Activated T-helper 1 cell treated with anti-CD3 and anti-CD28 coated beads, Interleukin-12 subunit alpha, Interleukin-12 subunit beta, Interleukin-2, Interleukin-4 antibody, amounts not matched to agents 30 ng/mL and 10 ng/mL and 1 ng/mL, durations not matched to agents 14 hours and 24 hours and 36 hours (primary cell): ENCODE measurements at regions of chr1 and their contacts with region 1.

Region 1: DNA sequence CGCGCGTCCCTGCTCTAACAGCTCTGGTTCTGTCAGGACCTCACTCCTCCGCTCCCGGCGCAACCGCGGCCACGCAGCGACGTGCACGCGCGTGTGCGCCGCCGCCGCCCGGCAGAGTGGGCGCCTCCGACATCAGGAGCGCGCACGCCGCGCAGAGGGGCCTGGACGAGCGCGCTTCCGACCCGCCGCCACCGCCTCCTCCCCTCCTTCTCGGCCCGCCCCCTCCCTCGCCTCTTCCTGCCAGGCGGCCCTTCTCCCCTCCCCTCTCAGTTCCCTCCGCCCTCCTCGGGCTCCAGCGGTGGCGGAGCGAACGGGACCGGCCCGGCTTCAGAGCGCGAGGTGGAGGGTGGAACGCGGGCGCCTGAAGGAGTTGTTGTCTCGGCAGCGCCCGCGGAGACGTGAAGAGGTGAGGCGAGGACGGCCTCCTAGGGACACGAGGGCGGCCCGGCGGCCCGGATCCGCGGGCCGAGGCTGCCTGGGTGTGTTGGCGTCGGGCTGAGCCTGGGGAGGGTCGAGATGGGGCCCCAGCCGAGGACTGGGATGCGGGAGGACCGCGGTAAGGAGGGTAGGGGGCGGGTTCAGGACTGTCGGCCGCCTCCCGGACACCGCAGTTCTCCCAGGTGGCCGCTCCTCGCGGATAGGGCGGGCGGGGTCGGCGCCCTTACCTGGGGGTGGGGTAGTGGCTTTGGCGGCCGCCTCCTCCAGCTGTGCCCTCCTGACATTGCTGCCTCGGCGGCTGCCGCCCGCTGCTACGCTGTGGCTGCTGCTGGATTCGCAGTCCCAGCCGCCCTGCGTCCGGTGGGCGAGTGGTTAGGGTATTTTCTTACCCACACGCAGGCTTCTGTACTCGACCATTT is at the start of gene RABGAP1L:
- DNase-seq: peak; percentile 89
- H3K4me3 Mint-ChIP-seq: peak within 1 kb of the TSS; percentile 96
- H3K27ac Mint-ChIP-seq: peak within 1 kb of the TSS; percentile 96
- H3K4me1 Mint-ChIP-seq: peaks cover 66% of the 10 kb centered on the region
- H3K27me3 Mint-ChIP-seq: no peaks in the 10 kb centered on the region
- total RNA-seq, gene RABGAP1L: 40.6 and 41.0 TPM in 2 replicates

Region 2: DNA sequence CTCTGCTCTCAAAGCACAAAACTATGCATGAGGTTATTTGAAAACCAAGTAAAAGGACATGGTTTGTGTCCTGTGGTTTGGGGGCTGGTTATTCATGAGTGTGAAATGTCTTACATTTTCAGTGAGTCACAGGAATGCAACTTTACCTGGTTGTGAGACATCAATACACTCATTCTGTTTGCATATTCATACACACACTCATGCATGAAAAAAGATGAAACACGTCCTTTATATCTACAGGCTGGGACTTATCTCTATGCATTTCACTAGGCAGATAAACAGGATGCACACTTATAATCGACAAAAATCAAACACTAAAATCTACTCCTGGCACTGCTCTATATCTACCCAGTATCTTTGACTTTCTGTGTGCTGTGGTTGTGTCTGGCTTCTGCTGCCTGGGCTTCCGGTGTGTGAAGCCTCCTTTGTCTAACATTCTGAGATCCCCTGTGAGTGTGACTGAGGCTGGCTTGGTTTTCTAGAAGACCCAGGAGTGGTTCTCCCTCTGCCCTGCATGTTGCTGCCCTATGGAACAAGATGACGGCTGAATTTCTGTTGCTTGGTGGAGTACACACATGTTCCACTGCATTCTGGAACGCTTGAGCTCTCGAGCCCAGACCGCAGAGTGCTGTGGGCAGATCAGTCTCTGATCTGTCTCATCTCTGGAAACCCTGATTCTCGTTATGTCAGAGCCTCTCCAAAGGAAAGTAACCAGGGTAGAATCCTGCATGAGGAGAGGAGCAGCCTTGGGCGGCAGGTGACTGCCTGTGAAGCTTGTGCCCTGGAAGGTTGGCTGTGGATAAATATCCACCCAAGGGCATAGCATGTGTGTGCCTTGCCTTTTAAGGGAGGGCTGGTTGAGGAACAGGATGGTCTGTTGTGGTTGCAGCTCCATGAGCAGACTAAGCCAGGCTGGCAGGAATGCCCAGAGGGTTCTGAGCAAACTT is 1520.3 kb before region 1 on chr1:
- intact Hi-C with region 1: loop called (anchors 5 kb)
- DNase-seq: peak; percentile 77
- H3K4me3 Mint-ChIP-seq: peak overlapping the region; percentile 62
- H3K27ac Mint-ChIP-seq: peak overlapping the region; percentile 99
- H3K4me1 Mint-ChIP-seq: peaks cover 75% of the 10 kb centered on the region
- H3K27me3 Mint-ChIP-seq: peaks cover 5% of the 10 kb centered on the region

Region 3: GRCh38 chr1:172870901-172871606 is 1288.4 kb before region 1 on chr1:
- intact Hi-C with region 1: loop called (anchors 5 kb)
- DNase-seq: no peak
- H3K4me3 Mint-ChIP-seq: no peak overlapping the region
- H3K27ac Mint-ChIP-seq: no peak overlapping the region
- H3K4me1 Mint-ChIP-seq: peaks cover 32% of the 10 kb centered on the region
- H3K27me3 Mint-ChIP-seq: peaks cover 39% of the 10 kb centered on the region

Region 4: DNA sequence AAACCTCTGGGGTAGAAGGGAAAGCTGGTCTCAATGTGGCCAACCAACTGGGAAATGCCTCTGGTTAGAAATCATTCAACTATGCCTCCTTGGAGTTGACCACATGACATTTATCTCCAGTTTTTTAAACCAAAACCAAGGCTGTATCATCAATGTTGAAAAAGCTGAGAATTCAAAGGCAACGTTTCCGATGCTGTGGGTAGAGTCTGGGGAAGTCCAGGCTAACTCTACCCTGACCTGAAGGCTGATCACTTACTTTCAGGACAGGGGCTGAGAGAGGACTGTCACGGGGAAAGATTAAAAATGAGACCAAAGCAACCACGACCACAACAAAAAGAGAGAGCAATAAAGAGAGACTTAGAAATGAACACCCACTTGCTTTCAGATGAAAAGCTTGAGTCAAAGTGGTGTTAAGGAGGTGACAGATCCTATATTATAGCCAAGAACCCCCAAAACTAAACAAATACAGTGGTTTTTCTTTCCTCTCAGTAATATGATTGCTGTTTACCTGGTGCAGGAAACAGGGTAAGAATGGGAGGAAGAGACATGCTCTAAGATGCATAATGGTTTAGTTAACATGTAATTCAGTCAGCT is 861.6 kb before region 1 on chr1:
- intact Hi-C with region 1: loop called (anchors 5 kb)
- DNase-seq: peak; percentile 15
- H3K4me3 Mint-ChIP-seq: peak overlapping the region; percentile 16
- H3K27ac Mint-ChIP-seq: peak overlapping the region; percentile 37
- H3K4me1 Mint-ChIP-seq: peaks cover 24% of the 10 kb centered on the region
- H3K27me3 Mint-ChIP-seq: peaks cover 8% of the 10 kb centered on the region

Region 5: GRCh38 chr1:173824331-173825081 is 335.0 kb before region 1 on chr1 and contains the starts of genes CENPL and DARS2:
- intact Hi-C with region 1: loop called (anchors 2 kb)
- DNase-seq: peak; percentile 90
- H3K4me3 Mint-ChIP-seq: peak within 1 kb of the TSS; percentile 91
- H3K27ac Mint-ChIP-seq: peak within 1 kb of the TSS; percentile 95
- H3K4me1 Mint-ChIP-seq: peaks cover 48% of the 10 kb centered on the region
- H3K27me3 Mint-ChIP-seq: no peaks in the 10 kb centered on the region
- total RNA-seq, gene CENPL: 23.6 and 25.7 TPM in 2 replicates
- total RNA-seq, gene DARS2: 41.9 TPM in 2 replicates

Region 6: DNA sequence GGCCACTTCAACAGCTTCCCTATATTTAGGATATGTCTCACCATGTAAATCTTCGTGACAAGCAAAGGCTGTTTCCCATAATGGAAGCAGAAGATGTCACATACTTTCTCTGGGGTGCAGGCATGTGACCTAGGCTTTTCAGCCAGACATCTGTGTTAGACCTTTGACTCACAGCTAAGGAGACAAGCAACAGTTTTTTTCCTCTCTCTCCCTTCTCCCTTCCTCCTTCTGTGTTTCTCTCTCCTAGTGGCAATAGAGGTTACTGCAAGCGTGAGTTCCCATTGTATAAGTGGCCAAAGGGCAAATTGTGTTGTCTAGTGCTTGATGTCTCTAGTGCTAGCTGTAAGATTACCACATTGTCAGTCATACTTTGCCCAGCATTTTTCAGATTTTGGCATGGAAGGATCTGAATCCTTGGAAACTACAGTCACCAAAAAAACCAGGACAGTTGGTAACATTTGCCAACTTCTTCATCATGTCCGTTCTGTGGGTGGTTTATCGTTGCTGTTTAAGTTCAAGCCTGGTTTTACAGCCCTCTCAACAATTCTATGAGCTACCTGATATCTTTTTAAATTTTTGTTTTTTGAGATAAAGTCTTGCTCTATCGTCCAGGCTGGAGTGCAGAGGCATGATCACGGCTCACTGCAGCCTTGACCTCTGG is 44.6 kb before region 1 on chr1:
- intact Hi-C with region 1: no loop called
- DNase-seq: peak; percentile 3
- H3K4me3 Mint-ChIP-seq: no peak overlapping the region
- H3K27ac Mint-ChIP-seq: no peak overlapping the region
- H3K4me1 Mint-ChIP-seq: no peaks in the 10 kb centered on the region
- H3K27me3 Mint-ChIP-seq: peaks cover 10% of the 10 kb centered on the region

Region 7: DNA sequence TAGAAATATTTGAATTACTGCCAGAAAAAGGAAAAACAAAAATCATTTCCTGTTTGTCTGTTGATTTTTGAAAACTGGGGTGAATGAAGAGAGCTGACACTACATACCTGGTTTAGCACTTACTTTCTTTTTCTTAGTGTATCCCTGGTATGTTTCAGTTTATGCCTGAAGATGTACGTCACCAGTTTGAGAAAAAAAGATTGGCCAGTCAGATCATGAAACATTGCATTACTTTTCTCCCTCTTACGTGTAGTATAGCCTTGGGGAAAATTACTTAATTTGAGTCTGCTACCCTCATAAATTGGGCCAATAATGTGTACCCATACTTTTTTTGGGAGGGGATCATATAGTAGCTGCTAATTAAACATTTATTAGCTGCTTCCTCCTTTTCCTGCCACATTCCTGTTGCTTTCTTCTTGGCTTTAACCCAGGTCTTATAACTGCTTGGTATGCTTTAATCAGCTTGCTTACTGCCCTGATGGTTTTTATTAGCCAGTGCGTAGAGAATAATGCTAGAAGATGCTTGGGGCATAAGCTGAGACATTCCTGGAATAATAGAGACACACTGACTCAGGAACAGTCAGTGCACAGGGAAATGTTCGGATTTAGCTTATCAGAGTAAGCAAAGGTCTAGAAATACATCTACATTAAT is 31.9 kb after region 1 on chr1:
- intact Hi-C with region 1: no loop called
- DNase-seq: no peak
- H3K4me3 Mint-ChIP-seq: no peak overlapping the region
- H3K27ac Mint-ChIP-seq: no peak overlapping the region
- H3K4me1 Mint-ChIP-seq: peaks cover 11% of the 10 kb centered on the region
- H3K27me3 Mint-ChIP-seq: no peaks in the 10 kb centered on the region

Region 8: GRCh38 chr1:174204697-174205308 is 45.3 kb after region 1 on chr1:
- intact Hi-C with region 1: loop called (anchors 2 kb)
- DNase-seq: no peak
- H3K4me3 Mint-ChIP-seq: no peak overlapping the region
- H3K27ac Mint-ChIP-seq: peak overlapping the region; percentile 67
- H3K4me1 Mint-ChIP-seq: peaks cover 54% of the 10 kb centered on the region
- H3K27me3 Mint-ChIP-seq: no peaks in the 10 kb centered on the region

Region 9: GRCh38 chr1:174700775-174701174 is 541.3 kb after region 1 on chr1:
- intact Hi-C with region 1: no loop called
- DNase-seq: no peak
- H3K4me3 Mint-ChIP-seq: no peak overlapping the region
- H3K27ac Mint-ChIP-seq: no peak overlapping the region
- H3K4me1 Mint-ChIP-seq: no peaks in the 10 kb centered on the region
- H3K27me3 Mint-ChIP-seq: no peaks in the 10 kb centered on the region